IMR-90 (cell line): ENCODE measurements at regions of chr4 and their contacts with region 1.

Region 1: DNA sequence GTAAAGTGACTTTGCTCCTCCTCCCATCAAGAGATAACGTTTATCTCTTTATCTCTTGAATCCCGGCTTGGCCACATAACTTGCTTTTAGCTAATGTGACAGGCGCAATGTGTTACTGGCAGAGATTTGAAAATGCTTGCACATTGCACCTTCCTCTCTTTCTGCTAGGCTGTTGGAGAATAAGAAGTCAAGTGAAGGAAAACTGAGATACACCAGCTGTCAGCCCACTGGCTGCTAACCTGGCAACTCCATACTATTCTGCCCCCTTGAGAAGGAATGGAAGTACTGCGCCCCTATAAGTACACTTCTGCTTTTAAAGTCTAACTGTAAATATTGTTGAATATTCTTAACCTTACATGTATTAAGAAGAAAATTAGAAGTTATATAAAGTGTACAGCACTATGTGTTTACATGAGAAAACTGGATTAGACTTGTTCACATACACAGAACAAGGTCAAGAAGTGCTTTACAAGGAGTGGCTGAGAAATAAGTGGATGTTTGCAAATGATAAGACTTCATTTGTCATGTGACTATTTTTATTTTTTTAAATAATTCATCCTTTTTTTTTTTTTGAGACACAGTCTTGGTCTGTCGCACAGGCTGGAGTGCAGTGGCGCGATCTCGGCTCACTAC is 424.5 kb upstream of the CTSO start:
- DNase-seq: peak; percentile 71
- ATAC-seq: peak; percentile 89
- H3K4me3 ChIP-seq: no peak overlapping the region
- H3K27ac ChIP-seq: no peak overlapping the region
- H3K4me1 ChIP-seq: peaks cover 2% of the 10 kb centered on the region
- H3K27me3 ChIP-seq: no peaks in the 10 kb centered on the region
- CTCF ChIP-seq: peak; percentile 69
- POLR2A ChIP-seq: no peak
- RAD21 ChIP-seq: peak; percentile 67

Region 2: GRCh38 chr4:155769090-155769489 is 609.1 kb before region 1 on chr4:
- CTCF ChIA-PET with region 1: no interaction called
- POLR2A ChIA-PET with region 1: no interaction called
- dilution Hi-C with region 1: no loop called
- in situ Hi-C with region 1: no loop called
- intact Hi-C with region 1: no loop called
- DNase-seq: peak; percentile 73
- ATAC-seq: peak; percentile 90
- H3K4me3 ChIP-seq: no peak overlapping the region
- H3K27ac ChIP-seq: no peak overlapping the region
- H3K4me1 ChIP-seq: peaks cover 3% of the 10 kb centered on the region
- H3K27me3 ChIP-seq: no peaks in the 10 kb centered on the region
- CTCF ChIP-seq: no peak
- POLR2A ChIP-seq: no peak
- RAD21 ChIP-seq: no peak

Region 3: GRCh38 chr4:155972098-155972497 is 406.1 kb before region 1 on chr4:
- CTCF ChIA-PET with region 1: no interaction called
- POLR2A ChIA-PET with region 1: no interaction called
- dilution Hi-C with region 1: no loop called
- in situ Hi-C with region 1: no loop called
- intact Hi-C with region 1: loop called (anchors 10 kb)
- DNase-seq: peak; percentile 38
- ATAC-seq: peak; percentile 59; the same call in 1 of the 2 replicates
- H3K4me3 ChIP-seq: no peak overlapping the region
- H3K27ac ChIP-seq: no peak overlapping the region
- H3K4me1 ChIP-seq: peaks cover 7% of the 10 kb centered on the region
- H3K27me3 ChIP-seq: no peaks in the 10 kb centered on the region; the same call in 1 of the 2 replicates
- CTCF ChIP-seq: peak; percentile 46
- POLR2A ChIP-seq: no peak
- RAD21 ChIP-seq: peak; percentile 47

Region 4: DNA sequence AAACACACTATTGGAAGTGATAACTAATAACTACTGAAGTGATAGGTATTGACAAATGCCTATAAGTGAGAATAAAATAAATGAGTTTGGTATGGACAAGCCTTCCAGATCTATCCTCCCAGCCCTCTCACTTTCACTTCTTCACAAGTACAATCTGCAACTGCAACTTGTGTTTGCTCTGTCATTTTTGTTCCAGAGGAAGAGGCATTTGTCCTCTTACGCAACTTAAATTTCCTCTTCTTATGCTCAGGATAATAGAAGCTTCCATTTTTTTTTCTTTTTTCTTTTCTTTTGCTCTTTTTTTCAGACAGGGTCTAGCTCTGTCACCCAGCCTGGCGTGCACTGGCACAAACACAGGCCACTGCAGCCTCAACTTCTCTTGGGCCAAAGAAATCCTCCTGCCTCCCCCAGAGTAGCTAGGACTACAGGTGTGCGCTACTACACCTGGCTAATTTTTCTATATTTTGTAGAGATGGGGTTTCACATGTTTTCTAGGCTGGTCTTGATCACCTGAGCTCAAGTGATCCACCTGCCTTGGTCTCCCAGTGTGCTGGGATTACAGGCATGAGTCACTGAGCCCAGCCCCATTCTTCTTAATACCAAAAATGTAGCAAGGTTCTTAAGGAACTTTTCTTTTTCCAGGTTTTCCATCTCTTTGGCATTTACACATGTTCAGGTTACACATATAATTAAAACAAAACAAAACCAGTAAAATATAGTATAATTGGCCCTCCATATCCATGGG is 520.4 kb after region 1 on chr4:
- CTCF ChIA-PET with region 1: no interaction called
- POLR2A ChIA-PET with region 1: no interaction called
- dilution Hi-C with region 1: no loop called
- in situ Hi-C with region 1: no loop called
- intact Hi-C with region 1: no loop called
- DNase-seq: peak; percentile 29
- ATAC-seq: no peak
- H3K4me3 ChIP-seq: no peak overlapping the region
- H3K27ac ChIP-seq: no peak overlapping the region
- H3K4me1 ChIP-seq: 0 out of 2 replicates have a peak, but pooled peaks cover 2% of the 10 kb centered on the region
- H3K27me3 ChIP-seq: no peaks in the 10 kb centered on the region
- CTCF ChIP-seq: no peak
- POLR2A ChIP-seq: no peak
- RAD21 ChIP-seq: no peak